ENCODE measurements at regions of chr6 and their contacts with region 1.

Region 1: GRCh38 chr6:151765444-151765886 is 42.0 kb upstream of the ESR1 start:
- DNase-seq: peak; percentile 64
- ATAC-seq: peak; percentile 50; the same call in 1 of the 2 replicates
- H3K4me3 ChIP-seq: peak overlapping the region in 1 of 2 experiments; percentile 6; a peak in 2 of 4 replicates
- H3K27ac ChIP-seq: no peak overlapping the region
- H3K4me1 ChIP-seq: peaks cover 0 to 21% of the 10 kb centered on the region in 2 experiments; a peak in 2 of 4 replicates
- H3K27me3 ChIP-seq: no peaks in the 10 kb centered on the region
- CTCF ChIP-seq: peak; percentile 66 to 86 (median 79)
- POLR2A ChIP-seq: no peak
- RAD21 ChIP-seq: peak; percentile 88

Region 2: GRCh38 chr6:151647976-151648639 is 117.4 kb before region 1 on chr6:
- CTCF ChIA-PET with region 1: interaction called, 4 read pairs
- POLR2A ChIA-PET with region 1: no interaction called
- RAD21 ChIA-PET with region 1: no interaction called
- intact Hi-C with region 1: loop called (anchors 1 kb)
- DNase-seq: peak; percentile 50
- ATAC-seq: peak; percentile 97
- H3K4me3 ChIP-seq: no peak overlapping the region
- H3K27ac ChIP-seq: no peak overlapping the region
- H3K4me1 ChIP-seq: peaks cover 0 to 10% of the 10 kb centered on the region in 2 experiments; a peak in 2 of 4 replicates
- H3K27me3 ChIP-seq: no peaks in the 10 kb centered on the region
- CTCF ChIP-seq: peak; percentile 51 to 82 (median 78); a peak in 5 of 6 replicates
- POLR2A ChIP-seq: no peak
- RAD21 ChIP-seq: peak; percentile 60

Region 3: GRCh38 chr6:151675746-151676416 is 89.6 kb before region 1 on chr6:
- CTCF ChIA-PET with region 1: interaction called, 6 read pairs
- POLR2A ChIA-PET with region 1: no interaction called
- RAD21 ChIA-PET with region 1: no interaction called
- intact Hi-C with region 1: loop called (anchors 5 kb)
- DNase-seq: peak; percentile 57
- ATAC-seq: peak; percentile 97
- H3K4me3 ChIP-seq: peak overlapping the region in 1 of 2 experiments; percentile 20; a peak in 1 of 4 replicates
- H3K27ac ChIP-seq: no peak overlapping the region
- H3K4me1 ChIP-seq: peaks cover 0 to 10% of the 10 kb centered on the region in 2 experiments; a peak in 1 of 4 replicates
- H3K27me3 ChIP-seq: no peaks in the 10 kb centered on the region
- CTCF ChIP-seq: peak; percentile 83 to 98 (median 98)
- POLR2A ChIP-seq: no peak
- RAD21 ChIP-seq: peak; percentile 93

Region 4: GRCh38 chr6:151749341-151749740 is 16.1 kb before region 1 on chr6:
- CTCF ChIA-PET with region 1: interaction called, 11 read pairs
- POLR2A ChIA-PET with region 1: no interaction called
- RAD21 ChIA-PET with region 1: no interaction called
- intact Hi-C with region 1: no loop called
- DNase-seq: no peak
- ATAC-seq: no peak
- H3K4me3 ChIP-seq: no peak overlapping the region
- H3K27ac ChIP-seq: no peak overlapping the region
- H3K4me1 ChIP-seq: no peaks in the 10 kb centered on the region
- H3K27me3 ChIP-seq: no peaks in the 10 kb centered on the region
- CTCF ChIP-seq: no peak
- POLR2A ChIP-seq: no peak
- RAD21 ChIP-seq: no peak

Region 5: GRCh38 chr6:152124429-152125074 is 359.1 kb after region 1 on chr6:
- CTCF ChIA-PET with region 1: interaction called, 44 read pairs
- POLR2A ChIA-PET with region 1: interaction called, 5 read pairs
- RAD21 ChIA-PET with region 1: interaction called, 7 to 11 read pairs
- intact Hi-C with region 1: loop called (anchors 1 kb)
- DNase-seq: peak; percentile 56
- ATAC-seq: peak; percentile 90
- H3K4me3 ChIP-seq: no peak overlapping the region
- H3K27ac ChIP-seq: no peak overlapping the region
- H3K4me1 ChIP-seq: no peaks in the 10 kb centered on the region
- H3K27me3 ChIP-seq: no peaks in the 10 kb centered on the region
- CTCF ChIP-seq: peak; percentile 72 to 88 (median 83)
- POLR2A ChIP-seq: no peak
- RAD21 ChIP-seq: peak; percentile 93

Region 6: GRCh38 chr6:152267967-152268845 is 502.7 kb after region 1 on chr6:
- CTCF ChIA-PET with region 1: no interaction called
- POLR2A ChIA-PET with region 1: no interaction called
- RAD21 ChIA-PET with region 1: no interaction called
- intact Hi-C with region 1: loop called (anchors 1 kb)
- DNase-seq: no peak
- ATAC-seq: no peak
- H3K4me3 ChIP-seq: no peak overlapping the region
- H3K27ac ChIP-seq: no peak overlapping the region
- H3K4me1 ChIP-seq: no peaks in the 10 kb centered on the region
- H3K27me3 ChIP-seq: no peaks in the 10 kb centered on the region
- CTCF ChIP-seq: peak; percentile 43 to 71 (median 71); a peak in 4 of 6 replicates
- POLR2A ChIP-seq: no peak
- RAD21 ChIP-seq: peak; percentile 73

Region 7: DNA sequence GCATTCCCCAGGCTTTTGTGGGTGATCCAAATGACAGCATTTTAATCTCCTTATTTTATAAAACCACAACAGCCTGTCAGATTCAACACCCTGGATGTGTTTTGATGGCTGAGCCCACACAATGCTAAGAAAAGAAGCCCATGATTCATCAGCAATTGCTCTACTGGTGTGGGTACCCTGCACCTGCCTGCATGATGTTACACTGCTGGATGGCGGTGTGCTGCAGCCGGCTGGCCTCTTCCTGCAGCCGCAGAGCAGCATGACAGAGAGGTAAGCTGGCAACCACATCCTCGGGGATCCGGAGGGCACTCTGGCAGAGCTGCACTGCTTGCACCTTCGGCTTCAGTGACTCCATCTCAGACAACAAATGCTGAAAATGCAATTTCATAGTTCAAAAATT is 544.2 kb after region 1 on chr6:
- CTCF ChIA-PET with region 1: no interaction called
- POLR2A ChIA-PET with region 1: no interaction called
- RAD21 ChIA-PET with region 1: no interaction called
- intact Hi-C with region 1: no loop called
- DNase-seq: no peak
- ATAC-seq: no peak
- H3K4me3 ChIP-seq: no peak overlapping the region
- H3K27ac ChIP-seq: no peak overlapping the region
- H3K4me1 ChIP-seq: peaks cover 0 to 8% of the 10 kb centered on the region in 2 experiments; a peak in 2 of 4 replicates
- H3K27me3 ChIP-seq: no peaks in the 10 kb centered on the region
- CTCF ChIP-seq: no peak
- POLR2A ChIP-seq: no peak
- RAD21 ChIP-seq: no peak

Region 8: DNA sequence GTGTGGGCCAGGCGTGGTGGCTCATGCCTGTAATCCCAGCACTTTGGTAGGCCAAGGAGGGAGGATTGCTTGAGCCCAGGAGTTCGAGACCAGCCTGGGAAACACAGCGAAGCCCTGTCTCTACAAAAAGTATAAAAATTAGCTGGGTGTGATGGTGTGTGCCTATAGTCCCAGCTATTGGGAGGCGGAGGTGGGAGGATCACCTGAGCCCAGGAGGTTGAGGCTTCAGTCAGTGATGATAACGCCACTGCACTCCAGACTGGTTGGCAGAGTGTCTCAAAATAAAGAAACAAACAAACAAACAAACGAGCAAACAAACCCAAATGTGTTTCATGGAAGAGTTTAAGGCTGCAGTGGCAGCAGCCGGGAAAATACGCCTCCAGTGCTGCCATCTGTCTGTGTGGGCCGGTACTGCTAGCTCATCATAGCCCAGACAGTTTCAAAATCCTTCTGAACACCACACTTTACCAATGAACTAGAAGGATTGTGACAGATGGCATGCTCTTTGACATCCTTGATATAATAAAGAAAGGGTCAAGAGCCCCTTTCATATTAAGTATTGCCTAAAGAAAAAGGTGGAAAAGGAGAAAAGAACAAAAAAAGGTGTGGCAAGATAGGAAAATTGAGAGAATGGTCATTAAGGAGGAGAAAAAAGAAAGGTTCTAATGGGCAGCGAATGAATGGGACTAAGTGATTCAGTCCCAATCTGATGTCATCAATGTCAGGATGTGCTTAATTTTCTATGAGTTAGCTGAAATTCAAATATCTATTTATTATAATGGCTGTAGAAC is 573.1 kb after region 1 on chr6:
- CTCF ChIA-PET with region 1: interaction called, 11 read pairs
- POLR2A ChIA-PET with region 1: no interaction called
- RAD21 ChIA-PET with region 1: no interaction called
- intact Hi-C with region 1: no loop called
- DNase-seq: no peak
- ATAC-seq: peak; percentile 93
- H3K4me3 ChIP-seq: no peak overlapping the region
- H3K27ac ChIP-seq: no peak overlapping the region
- H3K4me1 ChIP-seq: no peaks in the 10 kb centered on the region
- H3K27me3 ChIP-seq: no peaks in the 10 kb centered on the region
- CTCF ChIP-seq: peak; percentile 27 to 97 (median 91); a peak in 5 of 6 replicates
- POLR2A ChIP-seq: no peak
- RAD21 ChIP-seq: peak; percentile 59